Activated naive CD8-positive, alpha-beta T cell treated with anti-CD3 and anti-CD28 coated beads, Interleukin-2, amount 10 ng/mL, durations not matched to agents 7 days and 5 days (primary cell): ENCODE measurements at regions of chr12 and their contacts with region 1.

Region 1: DNA sequence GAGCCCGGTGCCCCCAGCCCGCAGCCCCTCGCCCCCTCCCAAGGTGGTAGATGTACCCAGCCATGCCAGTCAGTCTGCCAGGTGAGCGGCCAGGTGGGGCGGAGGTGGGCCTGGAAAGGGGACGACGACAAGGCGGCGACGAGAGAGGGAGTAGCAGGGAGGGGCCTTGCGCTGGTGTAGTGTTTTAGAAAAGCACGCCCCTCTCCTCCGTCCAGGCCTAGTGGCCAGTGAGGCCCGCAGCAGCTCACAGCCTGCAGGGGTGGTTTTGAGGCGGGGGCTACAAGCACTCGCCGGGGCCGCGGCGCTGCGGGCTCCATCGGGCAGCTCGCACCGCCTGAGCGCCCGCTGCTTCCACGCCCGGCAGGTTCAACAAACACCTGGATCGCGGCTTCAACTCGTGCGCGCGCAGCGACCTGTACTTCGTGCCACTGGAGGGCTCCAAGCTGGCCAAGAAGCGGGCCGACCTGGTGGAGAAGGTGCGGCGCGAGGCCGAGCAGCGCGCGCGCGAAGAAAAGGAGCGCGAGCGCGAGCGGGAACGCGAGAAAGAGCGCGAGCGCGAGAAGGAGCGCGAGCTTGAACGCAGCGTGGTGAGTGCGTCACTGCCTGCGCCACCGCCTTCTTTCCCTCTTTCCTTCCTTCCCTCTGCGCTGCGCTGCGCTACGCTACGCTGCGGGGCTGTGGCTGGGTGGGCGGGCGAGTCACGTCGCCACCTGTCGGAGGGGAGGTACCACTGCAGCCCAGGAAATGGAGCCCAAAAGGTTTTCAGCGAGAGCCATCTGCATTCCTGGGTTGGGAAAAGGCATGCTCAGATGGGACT is 5.9 kb upstream of the RNU7-1 start:
- DNase-seq: peak; percentile 90
- ATAC-seq: peak; percentile 92
- H3K4me3 Mint-ChIP-seq: peak overlapping the region; percentile 95
- H3K27ac Mint-ChIP-seq: peak overlapping the region; percentile 99
- H3K4me1 Mint-ChIP-seq: peaks cover 44% of the 10 kb centered on the region
- H3K27me3 Mint-ChIP-seq: no peaks in the 10 kb centered on the region

Region 2: GRCh38 chr12:6873094-6874014 is 64.3 kb before region 1 on chr12 and contains the start of gene SPSB2:
- POLR2A ChIA-PET with region 1: interaction called, 40 read pairs
- DNase-seq: peak; percentile 100
- ATAC-seq: peak; percentile 78
- H3K4me3 Mint-ChIP-seq: peak within 1 kb of the TSS; percentile 94
- H3K27ac Mint-ChIP-seq: peak within 1 kb of the TSS; percentile 93
- H3K4me1 Mint-ChIP-seq: peaks cover 48% of the 10 kb centered on the region
- H3K27me3 Mint-ChIP-seq: no peaks in the 10 kb centered on the region
- total RNA-seq, gene SPSB2: 16.4 to 17.0 TPM

Region 3: GRCh38 chr12:6914246-6914946 is 23.3 kb before region 1 on chr12 and contains the start of gene ENO2:
- POLR2A ChIA-PET with region 1: interaction called, 26 read pairs
- DNase-seq: peak; percentile 87
- ATAC-seq: peak; percentile 92
- H3K4me3 Mint-ChIP-seq: peak within 1 kb of the TSS; percentile 100
- H3K27ac Mint-ChIP-seq: peak within 1 kb of the TSS; percentile 88
- H3K4me1 Mint-ChIP-seq: peaks cover 37% of the 10 kb centered on the region
- H3K27me3 Mint-ChIP-seq: no peaks in the 10 kb centered on the region
- total RNA-seq, gene ENO2: 231 to 242 TPM

Region 4: GRCh38 chr12:6953442-6954315 is 16.0 kb after region 1 on chr12:
- POLR2A ChIA-PET with region 1: interaction called, 1,055 read pairs
- DNase-seq: peak; percentile 78
- ATAC-seq: peak; percentile 23
- H3K4me3 Mint-ChIP-seq: peak overlapping the region; percentile 100
- H3K27ac Mint-ChIP-seq: peak overlapping the region; percentile 100
- H3K4me1 Mint-ChIP-seq: peaks cover 72% of the 10 kb centered on the region
- H3K27me3 Mint-ChIP-seq: no peaks in the 10 kb centered on the region

Region 5: DNA sequence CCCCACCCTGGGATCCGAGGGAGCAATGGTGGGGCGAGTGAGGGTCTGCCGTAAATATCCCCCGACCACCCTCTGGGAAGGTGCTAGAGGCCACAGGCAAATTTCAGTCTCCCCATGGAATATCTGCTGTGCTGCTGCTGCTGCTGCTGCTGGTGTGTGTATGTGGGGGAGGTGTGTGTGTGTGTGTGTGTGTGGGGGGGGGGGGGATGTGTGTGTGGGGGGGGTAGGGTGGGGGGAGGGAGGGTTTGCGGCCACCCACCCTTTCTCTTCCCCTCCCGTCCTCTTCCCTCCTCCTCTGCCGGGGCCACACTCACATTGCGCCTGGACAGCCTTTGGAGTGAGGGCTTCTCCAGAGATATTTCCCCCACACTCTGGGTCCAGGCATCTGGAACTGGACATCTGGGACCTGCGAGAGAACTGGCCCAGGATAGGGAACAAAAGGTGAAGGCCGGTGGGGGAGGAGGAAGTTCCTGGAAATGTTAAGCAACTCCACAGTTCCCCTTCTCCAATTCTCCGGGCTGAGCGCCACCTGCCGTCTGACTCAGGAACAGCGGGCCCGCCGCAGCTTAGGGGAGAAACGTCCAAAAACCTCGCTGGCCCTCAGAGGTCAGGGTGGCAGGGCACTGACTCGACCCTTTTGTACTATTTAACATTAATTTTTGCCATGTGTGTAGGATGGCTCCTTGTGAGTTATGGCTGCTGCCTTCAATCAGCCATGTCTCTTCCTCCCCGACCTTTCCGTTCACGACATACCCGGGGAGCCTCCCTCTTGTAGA is 171.3 kb after region 1 on chr12 and contains the start of gene C1RL:
- POLR2A ChIA-PET with region 1: interaction called, 117 read pairs
- DNase-seq: peak; percentile 90
- ATAC-seq: peak; percentile 20
- H3K4me3 Mint-ChIP-seq: peak within 1 kb of the TSS; percentile 96
- H3K27ac Mint-ChIP-seq: peak within 1 kb of the TSS; percentile 95
- H3K4me1 Mint-ChIP-seq: peaks cover 39% of the 10 kb centered on the region
- H3K27me3 Mint-ChIP-seq: no peaks in the 10 kb centered on the region
- total RNA-seq, gene C1RL: 29.8 to 36.0 TPM